Activated CD4-positive, alpha-beta memory T cell treated with anti-CD3 and anti-CD28 coated beads for 36 hours (primary cell): ENCODE measurements at regions of chr11 and their contacts with region 1.

Region 1: GRCh38 chr11:110077831-110078325 is 15.3 kb upstream of the ZC3H12C start:
- DNase-seq: peak; percentile 58
- H3K4me3 Mint-ChIP-seq: no peak overlapping the region
- H3K27ac Mint-ChIP-seq: peak overlapping the region; percentile 71
- H3K4me1 Mint-ChIP-seq: peaks cover 14% of the 10 kb centered on the region
- H3K27me3 Mint-ChIP-seq: peaks cover 11% of the 10 kb centered on the region

Region 2: DNA sequence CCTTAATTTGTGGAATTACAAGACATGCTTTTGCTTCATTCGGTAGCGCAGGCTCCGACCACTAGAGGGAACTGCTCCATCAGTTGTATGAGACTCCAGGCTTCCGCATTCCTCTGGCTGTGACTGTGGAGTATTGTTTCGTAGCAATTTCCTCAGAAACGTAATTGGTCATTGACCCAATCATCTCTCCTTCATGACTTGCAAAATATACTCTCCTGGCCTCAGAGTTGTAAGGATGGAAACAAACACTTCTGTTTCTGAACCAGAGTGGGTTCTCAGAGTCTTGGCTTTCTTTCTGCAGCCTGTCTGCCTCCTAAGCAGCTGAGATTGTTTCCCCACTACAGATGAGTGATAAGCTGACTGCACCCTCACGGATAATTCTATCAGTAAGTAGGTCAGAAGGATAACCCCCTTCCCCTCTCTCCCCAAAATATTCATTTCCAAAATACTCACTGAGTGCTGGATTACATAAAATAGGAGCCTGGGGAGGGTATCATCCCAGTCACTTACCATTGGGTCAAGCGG is 131.5 kb before region 1 on chr11:
- CTCF ChIA-PET with region 1: interaction called, 3 read pairs
- POLR2A ChIA-PET with region 1: no interaction called
- intact Hi-C with region 1: loop called (anchors 5 kb)
- DNase-seq: peak; percentile 70
- H3K4me3 Mint-ChIP-seq: no peak overlapping the region
- H3K27ac Mint-ChIP-seq: no peak overlapping the region
- H3K4me1 Mint-ChIP-seq: peaks cover 2% of the 10 kb centered on the region
- H3K27me3 Mint-ChIP-seq: no peaks in the 10 kb centered on the region

Region 3: DNA sequence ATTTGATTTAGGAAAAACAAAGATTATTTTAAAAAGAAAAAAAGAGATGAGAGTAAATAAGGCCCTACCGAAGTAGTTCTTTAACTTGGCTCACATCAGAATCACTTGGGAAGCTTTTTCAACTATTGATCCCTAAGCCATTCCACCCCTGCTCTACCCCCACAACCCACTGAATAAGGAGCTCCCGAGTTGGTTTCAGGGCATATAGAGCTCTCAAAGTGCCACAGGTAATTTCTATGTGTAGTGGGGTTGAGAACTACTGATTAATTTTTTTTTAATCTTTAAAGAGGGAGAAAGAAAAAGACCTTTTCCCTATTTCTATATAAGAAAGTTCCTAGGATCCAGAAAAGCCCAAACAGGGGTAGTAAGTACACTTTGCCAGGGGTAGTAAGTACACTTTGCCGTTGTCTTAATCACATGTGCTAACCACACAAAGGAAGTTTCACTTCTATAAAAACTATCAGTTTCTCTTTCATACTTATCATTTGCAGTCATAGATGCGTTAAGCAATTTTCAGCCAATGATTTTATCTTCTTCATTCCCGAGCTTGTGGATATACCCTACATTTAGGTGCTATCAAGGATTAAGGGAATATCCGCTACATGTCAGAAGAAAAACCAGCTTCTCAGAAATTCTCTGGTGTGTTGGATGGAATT is 93.1 kb before region 1 on chr11:
- CTCF ChIA-PET with region 1: no interaction called
- POLR2A ChIA-PET with region 1: no interaction called
- intact Hi-C with region 1: loop called (anchors 5 kb)
- DNase-seq: no peak
- H3K4me3 Mint-ChIP-seq: no peak overlapping the region
- H3K27ac Mint-ChIP-seq: no peak overlapping the region
- H3K4me1 Mint-ChIP-seq: no peaks in the 10 kb centered on the region
- H3K27me3 Mint-ChIP-seq: peaks cover 2% of the 10 kb centered on the region

Region 4: DNA sequence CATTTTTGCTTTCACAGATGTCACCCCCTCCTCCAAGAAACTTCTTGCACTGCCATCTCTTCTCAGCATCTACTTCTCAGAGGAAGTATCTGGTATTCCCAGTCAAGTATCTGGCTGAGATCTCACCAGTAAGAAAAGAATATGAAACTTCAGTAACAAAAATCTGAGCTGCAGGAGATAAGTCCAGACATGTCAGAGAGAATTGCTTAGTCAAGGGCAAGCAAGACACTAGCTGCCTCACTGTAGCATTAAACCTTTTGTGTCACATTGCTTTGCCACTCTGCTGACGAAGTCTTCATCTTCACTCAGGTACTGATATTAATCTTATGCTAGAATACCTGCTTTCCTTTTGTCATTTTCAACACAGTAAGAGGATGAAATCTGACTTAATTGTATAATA is 55.3 kb before region 1 on chr11:
- CTCF ChIA-PET with region 1: no interaction called
- POLR2A ChIA-PET with region 1: no interaction called
- intact Hi-C with region 1: no loop called
- DNase-seq: no peak
- H3K4me3 Mint-ChIP-seq: no peak overlapping the region
- H3K27ac Mint-ChIP-seq: no peak overlapping the region
- H3K4me1 Mint-ChIP-seq: no peaks in the 10 kb centered on the region
- H3K27me3 Mint-ChIP-seq: no peaks in the 10 kb centered on the region

Region 5: GRCh38 chr11:110092515-110093404 is 14.9 kb after region 1 on chr11 and contains the start of gene ZC3H12C:
- CTCF ChIA-PET with region 1: interaction called, 6 read pairs
- POLR2A ChIA-PET with region 1: no interaction called
- intact Hi-C with region 1: loop called (anchors 1 kb)
- DNase-seq: peak; percentile 63
- H3K4me3 Mint-ChIP-seq: peak within 1 kb of the TSS; percentile 74
- H3K27ac Mint-ChIP-seq: no peak within 1 kb of the TSS
- H3K4me1 Mint-ChIP-seq: peaks cover 9% of the 10 kb centered on the region
- H3K27me3 Mint-ChIP-seq: peaks cover 43% of the 10 kb centered on the region
- total RNA-seq, gene ZC3H12C: 0.46 to 0.69 TPM

Region 6: GRCh38 chr11:110130642-110131238 is 52.9 kb after region 1 on chr11:
- CTCF ChIA-PET with region 1: no interaction called
- POLR2A ChIA-PET with region 1: no interaction called
- intact Hi-C with region 1: no loop called
- DNase-seq: no peak
- H3K4me3 Mint-ChIP-seq: no peak overlapping the region
- H3K27ac Mint-ChIP-seq: no peak overlapping the region
- H3K4me1 Mint-ChIP-seq: no peaks in the 10 kb centered on the region
- H3K27me3 Mint-ChIP-seq: peaks cover 8% of the 10 kb centered on the region